ENCODE measurements at regions of chr17 and their contacts with region 1.

Region 1: DNA sequence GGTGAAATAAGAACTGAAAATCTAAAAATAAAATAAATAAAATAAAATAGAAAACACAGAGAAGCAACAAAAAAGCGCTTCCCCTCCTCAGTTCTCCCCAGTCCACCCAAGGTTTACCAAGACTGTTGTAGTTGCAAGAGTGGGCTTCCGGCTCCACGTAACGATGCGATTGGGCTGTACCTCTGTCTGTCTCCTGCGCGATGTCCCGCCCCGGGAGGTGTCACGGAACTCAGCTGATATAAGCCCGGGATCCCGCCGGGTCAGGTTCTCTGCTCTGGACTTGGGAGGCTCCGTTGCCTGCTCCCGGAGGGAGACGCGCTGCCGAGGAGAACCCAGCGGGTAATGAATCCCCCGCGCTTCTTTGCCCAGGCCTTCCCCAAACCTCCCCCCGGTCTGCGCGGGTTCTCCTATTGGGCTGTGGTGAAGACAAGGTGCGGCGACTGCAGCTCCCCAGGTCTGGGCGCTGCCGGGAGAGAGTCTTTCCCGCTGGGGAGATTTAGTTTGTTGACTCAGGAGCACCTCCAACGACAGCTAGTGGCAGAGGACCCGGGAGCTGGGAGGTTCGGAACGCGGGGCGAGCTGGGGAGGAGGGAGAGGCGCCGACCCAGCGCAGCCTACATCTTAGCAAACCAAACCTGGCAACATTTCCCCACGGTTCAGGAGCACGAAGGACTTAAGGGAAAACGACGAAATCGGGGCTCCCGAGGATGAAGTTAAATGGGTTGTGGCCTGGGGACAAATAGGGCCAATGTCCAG is at the start of gene SLFN5:
- DNase-seq: peak; percentile 91
- H3K4me3 ChIP-seq: peak within 1 kb of the TSS; percentile 68 to 78 (median 71)
- H3K27ac ChIP-seq: peak within 1 kb of the TSS; percentile 100
- H3K4me1 ChIP-seq: peaks cover 32% of the 10 kb centered on the region
- H3K27me3 ChIP-seq: no peaks in the 10 kb centered on the region
- CTCF ChIP-seq: no peak
- total RNA-seq, gene SLFN5: 131 to 154 TPM

Region 2: DNA sequence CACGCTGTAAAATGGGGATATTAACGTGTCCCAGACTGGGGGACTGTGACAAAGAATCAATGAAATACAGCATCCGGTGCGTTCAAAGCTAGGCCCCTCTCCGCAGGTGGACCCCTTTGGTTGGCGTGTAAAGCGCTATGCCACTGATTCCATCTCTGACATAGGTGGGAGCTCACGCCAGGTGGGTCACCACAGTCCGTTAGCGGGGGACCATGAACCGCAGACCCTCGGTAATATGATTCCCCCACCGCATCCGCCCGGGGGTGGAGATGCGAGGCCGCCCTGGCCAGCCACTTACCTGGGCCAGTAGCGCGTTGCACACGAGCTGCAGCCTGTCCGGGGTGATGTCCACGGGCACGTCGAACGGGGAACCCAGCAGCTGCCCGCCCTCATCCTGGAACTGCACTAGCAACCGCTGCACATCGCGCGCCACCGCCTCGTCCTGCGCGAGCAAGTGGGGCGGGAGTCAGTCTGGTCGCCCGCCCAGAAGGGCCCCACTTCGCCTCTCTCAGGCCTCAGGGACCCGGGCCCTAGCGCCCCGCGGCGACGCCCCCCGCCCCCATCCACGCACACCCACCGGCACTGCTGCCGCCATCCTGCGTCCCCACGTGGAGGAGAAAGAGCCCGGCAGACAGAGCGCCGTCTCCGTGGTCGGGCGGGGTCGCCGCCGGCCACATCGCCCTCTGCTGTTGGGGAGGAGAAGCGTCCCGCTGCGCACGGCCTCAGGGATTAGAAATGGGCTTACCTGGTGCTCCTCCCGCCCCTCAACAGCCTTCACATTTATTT is 101.1 kb before region 1 on chr17 and contains the start of gene NLE1:
- CTCF ChIA-PET with region 1: no interaction called
- dilution Hi-C with region 1: no loop called
- in situ Hi-C with region 1: no loop called
- intact Hi-C with region 1: loop called (anchors 2 kb)
- DNase-seq: peak; percentile 72
- H3K4me3 ChIP-seq: peak within 1 kb of the TSS; percentile 68 to 98 (median 85)
- H3K27ac ChIP-seq: peak within 1 kb of the TSS; percentile 20
- H3K4me1 ChIP-seq: no peaks in the 10 kb centered on the region
- H3K27me3 ChIP-seq: no peaks in the 10 kb centered on the region
- CTCF ChIP-seq: peak; percentile 77 to 93
- total RNA-seq, gene NLE1: 22.2 to 27.4 TPM

Region 3: DNA sequence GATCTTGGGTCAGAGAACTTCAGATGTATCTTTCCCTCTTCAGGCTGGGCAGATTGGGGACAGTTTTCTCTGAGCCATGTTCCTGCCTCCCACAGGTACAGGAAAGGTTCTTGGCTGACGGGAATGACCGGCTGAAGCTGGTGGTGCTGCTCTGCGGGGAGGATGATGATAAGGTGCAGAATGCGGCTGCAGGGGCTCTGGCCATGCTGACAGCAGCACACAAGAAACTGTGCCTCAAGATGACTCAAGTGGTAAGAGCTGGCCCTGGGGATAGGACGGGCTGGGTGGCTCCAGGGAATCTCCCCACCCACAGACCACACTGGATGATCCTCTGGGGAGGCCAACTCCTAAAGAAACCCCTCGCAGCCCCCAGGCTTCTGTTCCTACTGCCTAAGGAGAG is 59.7 kb before region 1 on chr17:
- CTCF ChIA-PET with region 1: no interaction called
- dilution Hi-C with region 1: loop called (anchors 5 kb)
- in situ Hi-C with region 1: loop called in 1 of 2 experiments (anchors 10 kb)
- intact Hi-C with region 1: loop called (anchors 5 kb)
- DNase-seq: peak; percentile 23
- H3K4me3 ChIP-seq: no peak overlapping the region
- H3K27ac ChIP-seq: no peak overlapping the region
- H3K4me1 ChIP-seq: peaks cover 11% of the 10 kb centered on the region
- H3K27me3 ChIP-seq: no peaks in the 10 kb centered on the region
- CTCF ChIP-seq: no peak

Region 4: GRCh38 chr17:35312790-35313711 is 70.1 kb after region 1 on chr17:
- CTCF ChIA-PET with region 1: no interaction called
- dilution Hi-C with region 1: loop called (anchors 5 kb)
- in situ Hi-C with region 1: no loop called
- intact Hi-C with region 1: no loop called
- DNase-seq: peak; percentile 48
- H3K4me3 ChIP-seq: no peak overlapping the region
- H3K27ac ChIP-seq: no peak overlapping the region
- H3K4me1 ChIP-seq: peaks cover 21% of the 10 kb centered on the region
- H3K27me3 ChIP-seq: no peaks in the 10 kb centered on the region
- CTCF ChIP-seq: peak; percentile 77 to 82

Region 5: DNA sequence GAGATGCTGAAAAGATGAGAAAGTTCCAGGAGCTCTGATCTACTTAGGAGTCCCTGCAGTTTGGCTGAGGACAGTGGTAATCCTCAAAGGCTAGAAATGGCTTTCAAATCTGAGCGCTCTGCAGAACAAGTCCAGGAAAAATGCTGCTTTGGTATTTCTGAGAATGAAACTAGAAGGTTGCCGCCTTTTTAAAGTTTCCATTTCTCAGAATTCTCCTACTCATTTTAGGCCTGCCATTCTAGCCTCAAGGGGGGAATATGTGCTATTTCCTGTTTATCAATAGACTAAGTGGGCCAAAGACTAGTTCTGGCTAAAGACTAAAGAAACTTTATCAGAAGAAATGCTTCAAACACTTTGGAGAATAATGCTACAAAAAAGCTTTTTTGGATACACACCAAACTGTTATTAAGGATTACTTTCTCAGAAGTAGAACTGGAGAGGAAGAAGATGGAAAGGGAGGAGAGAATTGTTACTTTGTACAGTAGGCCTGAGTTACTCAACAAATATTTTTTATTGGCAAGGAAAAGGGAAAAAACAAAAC is 294.7 kb after region 1 on chr17 and contains the start of gene SLFN12L:
- CTCF ChIA-PET with region 1: no interaction called
- dilution Hi-C with region 1: no loop called
- in situ Hi-C with region 1: no loop called
- intact Hi-C with region 1: loop called (anchors 2 kb)
- DNase-seq: no peak
- H3K4me3 ChIP-seq: no peak within 1 kb of the TSS
- H3K27ac ChIP-seq: no peak within 1 kb of the TSS
- H3K4me1 ChIP-seq: no peaks in the 10 kb centered on the region
- H3K27me3 ChIP-seq: peaks cover 2% of the 10 kb centered on the region
- CTCF ChIP-seq: no peak
- total RNA-seq, gene SLFN12L: 0.12 to 0.17 TPM

Region 6: GRCh38 chr17:35747540-35748017 is 504.6 kb after region 1 on chr17:
- CTCF ChIA-PET with region 1: no interaction called
- dilution Hi-C with region 1: no loop called
- in situ Hi-C with region 1: no loop called
- intact Hi-C with region 1: loop called (anchors 5 kb)
- DNase-seq: peak; percentile 50
- H3K4me3 ChIP-seq: no peak overlapping the region
- H3K27ac ChIP-seq: no peak overlapping the region
- H3K4me1 ChIP-seq: peaks cover 33% of the 10 kb centered on the region
- H3K27me3 ChIP-seq: no peaks in the 10 kb centered on the region
- CTCF ChIP-seq: peak; percentile 84 to 92